ENCODE measurements at regions of chr19 and their contacts with region 1.

Region 1: GRCh38 chr19:29819986-29820385 is 8.2 kb downstream of the CCNE1 start:
- H3K4me3 ChIP-seq: no peak overlapping the region
- H3K27ac ChIP-seq: no peak overlapping the region
- H3K4me1 ChIP-seq: no peaks in the 10 kb centered on the region
- CTCF ChIP-seq: no peak

Region 2: GRCh38 chr19:29779921-29780320 is 40.1 kb before region 1 on chr19:
- CTCF ChIA-PET with region 1: no interaction called
- POLR2A ChIA-PET with region 1: no interaction called
- H3K4me3 ChIP-seq: no peak overlapping the region
- H3K27ac ChIP-seq: no peak overlapping the region
- H3K4me1 ChIP-seq: no peaks in the 10 kb centered on the region
- CTCF ChIP-seq: peak; percentile 50; the same call in 1 of the 2 replicates

Region 3: DNA sequence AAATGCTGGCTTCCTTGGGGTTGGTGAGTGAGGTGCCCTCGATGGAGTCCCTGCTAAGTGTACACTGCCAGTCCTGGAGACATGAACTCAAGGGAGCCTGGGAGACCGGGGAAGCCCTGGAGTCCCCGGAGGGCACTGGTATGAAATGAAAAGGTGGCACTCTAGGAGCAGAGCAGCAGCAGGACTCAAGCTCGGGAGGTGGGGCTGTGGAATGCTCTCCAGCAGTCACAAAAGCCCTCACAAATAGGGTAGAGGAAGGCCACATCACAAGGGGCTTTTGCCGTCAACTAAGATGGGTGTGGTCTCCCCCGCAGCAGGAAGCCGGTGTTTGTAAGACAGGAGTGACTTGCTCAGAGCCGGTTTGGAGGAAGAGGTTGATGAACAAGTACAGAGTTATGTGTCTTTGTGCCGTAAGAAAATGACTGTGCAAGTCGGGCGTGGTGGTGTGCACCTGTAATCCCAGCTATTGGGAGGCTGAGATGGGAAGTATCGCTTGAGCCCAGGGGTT is 11.1 kb after region 1 on chr19:
- CTCF ChIA-PET with region 1: no interaction called
- POLR2A ChIA-PET with region 1: interaction called, 15 read pairs
- H3K4me3 ChIP-seq: no peak overlapping the region
- H3K27ac ChIP-seq: no peak overlapping the region
- H3K4me1 ChIP-seq: no peaks in the 10 kb centered on the region; the same call in 1 of the 2 replicates
- CTCF ChIP-seq: no peak